Right ventricle myocardium inferior (tissue), 1 donor: ENCODE measurements at regions of chr1 and their contacts with region 1.

Region 1: GRCh38 chr1:47532921-47533792 is 95.3 kb downstream of the FOXD2 start:
- DNase-seq: peak; percentile 78
- ATAC-seq: peak; percentile 56

Region 2: GRCh38 chr1:47378147-47378546 is 155.0 kb before region 1 on chr1:
- intact Hi-C with region 1: no loop called
- DNase-seq: no peak
- ATAC-seq: no peak

Region 3: DNA sequence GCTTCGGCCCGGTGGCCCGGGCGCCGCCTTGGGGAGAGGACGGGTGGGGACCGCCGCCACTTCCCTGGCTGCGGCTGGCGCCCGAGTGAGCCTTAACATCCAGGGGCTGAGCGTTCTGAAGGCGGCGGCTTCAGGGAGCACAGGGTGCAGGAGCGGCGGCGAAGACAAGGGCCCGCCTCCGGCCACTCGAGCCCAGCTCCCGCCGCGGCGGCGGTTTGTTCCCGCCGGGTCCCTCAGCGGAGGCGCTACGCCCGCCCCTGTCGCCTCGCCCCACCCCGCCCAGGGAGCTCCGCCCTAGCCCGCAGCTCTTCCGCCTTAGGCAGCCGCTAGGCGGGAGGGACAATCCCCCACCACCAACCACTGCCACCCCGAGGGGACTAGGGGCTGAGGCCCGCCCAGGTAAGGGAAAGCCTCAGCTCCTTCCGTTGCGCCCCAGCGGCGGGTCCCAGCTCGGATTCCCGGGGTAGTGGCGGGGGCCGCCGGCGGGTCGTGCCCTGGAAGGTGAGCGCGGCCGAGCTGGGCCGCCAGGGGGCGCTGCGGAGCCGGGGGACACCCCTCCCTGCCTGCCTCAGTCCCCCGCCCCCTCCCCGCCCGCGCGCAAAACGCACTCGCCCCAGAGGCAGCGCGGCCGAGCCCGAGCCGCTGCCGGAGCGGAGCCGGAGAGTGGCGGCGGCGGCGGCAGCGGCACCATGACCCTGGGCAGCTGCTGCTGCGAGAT is 95.6 kb before region 1 on chr1 and contains the start of gene FOXD2:
- intact Hi-C with region 1: loop called (anchors 10 kb)
- DNase-seq: peak; percentile 92
- ATAC-seq: peak; percentile 96
- total RNA-seq, gene FOXD2: 0.05 TPM

Region 4: GRCh38 chr1:47587891-47588582 is 54.9 kb after region 1 on chr1:
- intact Hi-C with region 1: loop called (anchors 5 kb)
- DNase-seq: no peak
- ATAC-seq: peak; percentile 68

Region 5: GRCh38 chr1:47624531-47624930 is 91.4 kb after region 1 on chr1:
- intact Hi-C with region 1: loop called (anchors 10 kb)
- DNase-seq: no peak
- ATAC-seq: no peak